ENCODE measurements at regions of chr5 and their contacts with region 1.

Region 1: GRCh38 chr5:95760273-95761191 is 29.4 kb downstream of the RHOBTB3 start:
- DNase-seq: no peak
- ATAC-seq: peak; percentile 82
- H3K4me3 Mint-ChIP-seq: peak overlapping the region; percentile 74
- H3K27ac Mint-ChIP-seq: peak overlapping the region; percentile 89
- H3K4me1 Mint-ChIP-seq: peaks cover 42% of the 10 kb centered on the region
- H3K27me3 Mint-ChIP-seq: no peaks in the 10 kb centered on the region
- CTCF ChIP-seq: no peak

Region 2: DNA sequence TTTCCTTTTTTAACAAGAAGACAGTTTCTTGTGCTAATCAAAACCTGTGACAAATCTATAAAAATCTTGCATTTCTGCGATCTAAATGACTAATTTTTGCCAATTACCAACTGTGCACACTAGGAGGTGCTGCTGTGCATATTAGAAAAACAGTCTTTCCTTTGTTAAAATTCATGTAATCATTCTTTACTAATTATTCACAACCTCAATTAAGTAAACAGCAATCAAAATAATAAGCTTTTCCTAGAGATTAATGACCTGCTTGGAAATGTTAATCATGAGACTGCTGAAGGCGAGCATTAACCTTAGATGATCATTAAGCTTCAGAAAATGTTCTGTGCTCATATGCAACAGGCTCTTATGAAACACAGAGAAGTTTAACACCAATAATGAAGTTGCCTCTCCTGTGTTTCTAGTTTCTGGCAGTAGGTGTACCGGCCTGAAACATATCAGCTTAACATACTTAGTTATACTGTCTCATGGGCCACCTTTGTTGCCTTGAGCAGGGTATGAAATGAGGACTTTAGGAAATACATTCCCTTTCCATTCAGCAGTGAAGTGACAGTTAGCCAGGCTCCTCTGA is 96.2 kb before region 1 on chr5:
- CTCF ChIA-PET with region 1: interaction called, 5 read pairs
- POLR2A ChIA-PET with region 1: no interaction called
- intact Hi-C with region 1: loop called (anchors 5 kb)
- DNase-seq: no peak
- ATAC-seq: no peak
- H3K4me3 Mint-ChIP-seq: no peak overlapping the region
- H3K27ac Mint-ChIP-seq: no peak overlapping the region
- H3K4me1 Mint-ChIP-seq: no peaks in the 10 kb centered on the region
- H3K27me3 Mint-ChIP-seq: peaks cover 1% of the 10 kb centered on the region
- CTCF ChIP-seq: peak; percentile 81

Region 3: GRCh38 chr5:95739857-95740256 is 20.7 kb before region 1 on chr5:
- CTCF ChIA-PET with region 1: no interaction called
- POLR2A ChIA-PET with region 1: no interaction called
- intact Hi-C with region 1: loop called (anchors 2 kb)
- DNase-seq: no peak
- ATAC-seq: peak; percentile 65
- H3K4me3 Mint-ChIP-seq: no peak overlapping the region
- H3K27ac Mint-ChIP-seq: peak overlapping the region; percentile 50
- H3K4me1 Mint-ChIP-seq: peaks cover 23% of the 10 kb centered on the region
- H3K27me3 Mint-ChIP-seq: no peaks in the 10 kb centered on the region
- CTCF ChIP-seq: no peak

Region 4: GRCh38 chr5:95773335-95774059 is 13.0 kb after region 1 on chr5:
- CTCF ChIA-PET with region 1: no interaction called
- POLR2A ChIA-PET with region 1: no interaction called
- intact Hi-C with region 1: no loop called
- DNase-seq: no peak
- ATAC-seq: no peak
- H3K4me3 Mint-ChIP-seq: no peak overlapping the region
- H3K27ac Mint-ChIP-seq: no peak overlapping the region
- H3K4me1 Mint-ChIP-seq: no peaks in the 10 kb centered on the region
- H3K27me3 Mint-ChIP-seq: no peaks in the 10 kb centered on the region
- CTCF ChIP-seq: no peak